Esophagus muscularis mucosa (tissue), 4 donors: ENCODE measurements at regions of chr13 and their contacts with region 1.

Region 1: DNA sequence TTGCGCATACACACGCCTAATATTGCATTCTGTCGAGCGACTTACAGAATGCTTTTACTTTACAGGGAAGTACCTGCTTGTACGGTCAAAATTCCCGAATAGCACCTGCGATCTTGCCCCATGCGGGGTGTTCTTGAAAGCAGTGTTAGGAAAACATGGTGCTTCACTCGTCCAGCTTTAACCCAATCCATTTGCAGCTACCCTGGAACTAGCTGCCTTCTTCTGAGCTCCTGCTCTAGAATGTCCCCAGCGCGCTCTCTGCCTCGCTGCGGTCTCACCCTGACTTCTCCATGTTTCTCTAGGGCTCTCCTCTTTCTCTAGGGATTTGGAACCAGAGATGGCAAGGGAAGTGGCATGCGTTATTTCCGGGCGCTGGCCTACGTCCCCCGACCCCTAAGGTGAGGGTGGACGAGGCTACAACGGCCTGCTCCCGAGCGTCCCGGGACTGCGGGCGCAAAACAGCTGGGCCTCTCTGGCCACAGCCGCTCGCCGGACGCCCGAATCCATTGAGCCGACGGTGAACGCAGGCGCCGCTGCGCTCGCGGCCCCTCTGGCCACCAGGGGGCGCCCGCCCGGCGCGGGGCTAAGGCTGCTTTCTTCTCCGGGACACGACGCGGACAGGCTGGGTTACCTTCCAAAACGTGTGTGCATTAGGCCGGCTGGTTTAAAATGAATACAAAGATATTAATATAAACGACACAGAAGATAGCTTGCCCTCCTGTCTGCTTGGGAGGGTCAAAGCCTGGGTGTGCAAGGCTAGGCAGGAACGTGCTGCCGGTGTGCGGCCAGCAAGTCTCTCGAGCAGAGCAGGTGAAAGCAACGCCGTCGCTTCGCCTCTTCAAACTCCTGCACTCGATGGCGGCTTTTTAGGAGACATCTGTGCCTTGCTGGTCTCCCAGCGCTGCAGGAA is 1.8 kb upstream of the SPRY2 start:
- DNase-seq: peak; percentile 96
- H3K4me3 ChIP-seq: peak overlapping the region; percentile 79 to 96 (median 88)
- H3K27ac ChIP-seq: peak overlapping the region; percentile 89 to 94 (median 91)
- H3K4me1 ChIP-seq: peaks cover 18 to 24% (median 21%) of the 10 kb centered on the region in 4 donors
- H3K27me3 ChIP-seq: no peaks in the 10 kb centered on the region
- CTCF ChIP-seq: peak; percentile 88 to 99 (median 99)
- EP300 ChIP-seq: no peak
- POLR2A ChIP-seq: no peak

Region 2: DNA sequence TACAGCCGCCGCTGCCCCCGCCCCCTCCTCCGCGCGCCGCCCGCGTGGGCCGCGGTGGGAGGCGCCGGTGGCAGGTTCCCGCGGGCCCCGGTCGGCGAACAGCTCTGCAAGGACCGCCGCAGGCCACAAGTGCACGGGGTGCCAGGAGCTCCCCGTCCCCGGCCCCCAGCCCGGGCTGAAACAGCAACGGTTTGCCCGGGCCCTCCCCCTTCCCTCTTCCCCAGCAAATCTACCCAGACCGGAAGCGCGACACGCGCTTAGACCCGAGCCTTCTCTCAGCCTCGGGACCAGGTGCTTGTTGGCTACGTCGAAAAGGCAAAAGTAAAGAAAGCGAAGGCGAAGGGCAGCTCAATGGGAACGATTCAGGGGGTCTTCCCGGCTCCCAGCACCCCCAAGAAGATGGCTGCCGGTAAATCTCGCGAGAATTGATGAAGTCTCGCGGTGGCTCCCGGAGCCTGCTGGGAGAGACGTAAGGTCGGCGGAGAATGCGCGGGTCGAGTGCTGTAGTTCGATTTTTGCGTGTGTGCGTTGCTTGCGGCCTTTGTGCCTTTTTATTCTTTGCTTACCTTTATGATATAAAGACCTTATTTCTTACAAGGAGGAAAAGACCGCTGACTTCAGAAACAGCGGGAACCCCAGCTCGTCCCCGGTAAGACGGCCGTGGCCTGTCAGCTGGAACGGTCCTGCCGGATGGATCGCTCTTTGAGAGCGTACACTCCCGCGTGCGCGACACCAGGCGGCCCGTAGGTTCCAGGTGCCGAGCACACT is 936.7 kb before region 1 on chr13 and contains the start of gene RBM26:
- intact Hi-C with region 1: loop called (anchors 10 kb)
- DNase-seq: peak; percentile 98
- H3K4me3 ChIP-seq: peak within 1 kb of the TSS; percentile 81 to 99 (median 96)
- H3K27ac ChIP-seq: peak within 1 kb of the TSS; percentile 88 to 97 (median 94)
- H3K4me1 ChIP-seq: peaks cover 39 to 55% (median 49%) of the 10 kb centered on the region in 4 donors
- H3K27me3 ChIP-seq: no peaks in the 10 kb centered on the region
- CTCF ChIP-seq: peak in 2 of 3 experiments; percentile 27 to 35
- EP300 ChIP-seq: no peak
- POLR2A ChIP-seq: peak; percentile 35
- total RNA-seq, gene RBM26: 19.8 to 29.9 (median 21.3) TPM

Region 3: DNA sequence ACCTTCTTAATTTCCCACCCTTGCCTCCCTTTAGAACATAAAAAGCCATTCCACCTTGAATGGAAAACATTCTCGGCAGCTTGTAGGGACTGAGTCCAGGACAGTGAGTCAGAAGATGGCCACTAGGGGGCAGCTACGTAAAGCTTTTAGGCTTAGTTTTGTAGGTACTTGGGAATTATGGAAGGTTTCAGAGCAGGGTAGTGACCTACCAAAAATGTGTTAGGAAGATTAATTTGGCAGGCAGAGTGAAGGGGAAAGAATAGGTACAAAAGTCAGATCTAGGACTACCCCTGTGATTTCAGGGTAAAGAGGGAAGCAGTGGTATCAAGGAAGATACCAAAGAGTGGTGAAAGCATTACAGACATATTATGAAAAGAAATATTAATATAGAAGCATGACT is 663.4 kb before region 1 on chr13:
- intact Hi-C with region 1: loop called (anchors 10 kb)
- DNase-seq: no peak
- H3K4me3 ChIP-seq: no peak overlapping the region
- H3K27ac ChIP-seq: no peak overlapping the region
- H3K4me1 ChIP-seq: no peaks in the 10 kb centered on the region
- H3K27me3 ChIP-seq: no peaks in the 10 kb centered on the region
- CTCF ChIP-seq: peak; percentile 56 to 73 (median 68)
- EP300 ChIP-seq: no peak
- POLR2A ChIP-seq: no peak

Region 4: DNA sequence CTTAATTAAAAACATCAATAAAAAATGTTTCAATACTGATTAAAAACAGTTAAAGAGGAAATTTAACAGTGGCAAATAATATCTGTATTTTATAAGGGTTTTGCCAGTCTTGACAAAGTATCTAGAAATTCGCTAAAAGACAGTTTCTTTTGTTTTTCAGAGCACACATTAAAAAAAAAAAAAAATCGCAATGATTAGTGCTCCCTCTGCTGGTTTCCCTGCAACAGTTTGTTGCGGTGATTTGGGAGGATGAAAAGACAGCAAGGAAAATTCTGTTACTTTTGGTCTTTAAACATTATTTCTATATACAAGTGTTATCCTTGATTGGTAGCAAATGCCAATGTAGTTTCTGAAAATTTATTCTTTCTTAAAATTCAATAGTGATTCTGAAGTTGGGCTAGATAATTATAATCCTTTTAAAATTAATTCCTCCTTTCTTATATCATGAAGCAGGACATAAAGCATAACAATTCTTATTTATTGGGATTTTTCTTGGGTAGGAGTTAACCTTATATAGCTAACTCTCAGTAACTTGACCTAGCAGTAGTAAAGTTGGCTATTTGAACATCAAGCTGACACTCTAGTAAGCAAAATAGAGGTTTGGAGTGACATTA is 21.3 kb after region 1 on chr13:
- intact Hi-C with region 1: loop called (anchors 1 kb)
- DNase-seq: no peak
- H3K4me3 ChIP-seq: peak overlapping the region; percentile 16 to 28 (median 22)
- H3K27ac ChIP-seq: no peak overlapping the region
- H3K4me1 ChIP-seq: peaks cover 5 to 9% (median 8%) of the 10 kb centered on the region in 4 donors
- H3K27me3 ChIP-seq: no peaks in the 10 kb centered on the region
- CTCF ChIP-seq: peak; percentile 66 to 83 (median 82)
- EP300 ChIP-seq: no peak
- POLR2A ChIP-seq: no peak